B cell (primary cell): ENCODE measurements at regions of chr6 and their contacts with region 1.

Region 1: DNA sequence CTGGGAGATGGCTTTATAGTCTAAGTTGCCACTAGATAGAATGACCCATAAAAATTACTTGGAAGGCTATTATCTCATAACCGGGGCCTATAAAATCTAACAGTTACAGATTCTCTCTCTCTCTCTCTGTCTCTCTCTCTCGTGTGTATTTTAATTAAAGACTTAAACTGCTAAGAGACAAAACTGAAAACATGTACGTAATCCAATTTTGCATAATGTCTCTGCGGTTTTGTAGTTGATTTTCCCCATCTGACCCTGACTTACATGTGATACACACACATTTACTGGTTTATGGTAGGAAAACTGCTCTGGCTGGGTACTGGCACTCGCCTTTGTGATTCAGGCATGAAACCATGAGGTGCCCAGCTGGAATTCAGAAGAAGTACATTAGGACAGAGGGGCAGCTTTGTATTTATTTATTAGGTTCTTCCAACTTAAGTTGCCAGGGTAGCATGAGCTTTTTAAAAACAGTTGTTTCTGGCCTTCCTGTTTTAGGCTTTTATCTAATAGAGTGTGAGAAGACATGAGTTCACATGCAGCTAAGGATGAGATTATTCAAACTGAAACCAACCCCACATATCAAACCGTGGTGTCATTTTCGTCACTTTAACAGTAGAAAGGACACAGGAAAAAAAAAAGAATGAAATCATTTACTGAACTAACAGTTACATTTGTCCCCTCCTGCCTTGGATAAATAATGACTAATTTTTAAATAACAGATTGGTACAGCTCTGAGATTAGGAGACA is 182.5 kb downstream of the GMPR start:
- DNase-seq: peak; percentile 85
- ATAC-seq: peak; percentile 65
- H3K4me3 ChIP-seq: peak overlapping the region in 1 of 5 experiments; percentile 31
- H3K4me3 Mint-ChIP-seq: peak overlapping the region; percentile 79
- H3K27ac ChIP-seq: peak overlapping the region; percentile 87 to 93
- H3K27ac Mint-ChIP-seq: peak overlapping the region; percentile 100
- H3K4me1 ChIP-seq: peaks cover 20 to 37% of the 10 kb centered on the region in 2 donors
- H3K4me1 Mint-ChIP-seq: peaks cover 47% of the 10 kb centered on the region
- H3K27me3 ChIP-seq: no peaks in the 10 kb centered on the region
- H3K27me3 Mint-ChIP-seq: no peaks in the 10 kb centered on the region
- CTCF ChIP-seq: no peak

Region 2: DNA sequence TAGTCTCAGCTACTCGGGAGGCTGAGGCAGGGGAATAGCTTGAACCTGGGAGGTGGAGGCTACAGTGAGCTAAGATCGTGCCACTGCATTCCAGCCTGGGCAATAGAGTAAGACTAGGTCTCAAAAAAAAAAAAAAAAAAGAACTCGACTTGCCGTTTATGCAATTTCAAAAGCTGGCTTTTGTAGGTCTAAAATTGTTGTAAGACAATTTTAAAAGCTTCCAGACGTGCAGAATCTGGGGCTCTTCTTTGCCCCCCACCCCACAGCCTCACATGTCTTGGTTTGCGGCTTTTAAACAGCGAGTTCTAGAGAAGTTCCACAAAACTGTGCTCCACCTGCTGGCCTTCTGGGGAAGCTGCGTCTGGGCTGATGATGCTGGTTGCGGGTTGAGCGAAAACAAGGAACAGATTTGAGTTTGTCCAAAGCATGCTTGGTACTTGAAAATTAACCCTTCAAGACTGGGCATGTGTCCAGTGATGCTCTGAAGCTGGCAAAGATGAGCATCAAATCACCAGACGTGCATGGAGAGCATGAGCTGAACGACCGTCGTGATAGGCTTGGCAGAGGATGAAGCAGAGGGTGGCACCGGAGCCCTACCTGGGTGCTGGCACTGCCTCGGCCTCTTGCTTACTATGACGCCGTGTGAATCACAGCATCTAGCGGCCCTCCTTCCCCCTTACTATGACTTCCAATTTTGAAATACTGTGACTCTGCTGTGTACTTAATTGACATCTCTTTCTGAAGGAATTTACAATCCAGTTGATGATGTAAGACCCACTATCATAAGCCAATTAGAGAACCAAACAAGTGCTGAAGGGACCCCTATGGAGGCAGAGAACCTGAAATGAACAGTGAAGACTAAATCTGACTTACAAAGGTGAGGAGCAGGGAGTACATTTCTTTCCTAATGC is 11.1 kb before region 1 on chr6:
- CTCF ChIA-PET with region 1: interaction called, 36 read pairs
- POLR2A ChIA-PET with region 1: interaction called, 3 read pairs
- intact Hi-C with region 1: loop called (anchors 1 kb)
- DNase-seq: peak; percentile 75
- ATAC-seq: peak; percentile 64
- H3K4me3 ChIP-seq: no peak overlapping the region
- H3K4me3 Mint-ChIP-seq: peak overlapping the region; percentile 53
- H3K27ac ChIP-seq: no peak overlapping the region
- H3K27ac Mint-ChIP-seq: peak overlapping the region; percentile 66
- H3K4me1 ChIP-seq: peaks cover 10 to 50% of the 10 kb centered on the region in 2 donors
- H3K4me1 Mint-ChIP-seq: peaks cover 60% of the 10 kb centered on the region
- H3K27me3 ChIP-seq: no peaks in the 10 kb centered on the region
- H3K27me3 Mint-ChIP-seq: no peaks in the 10 kb centered on the region
- CTCF ChIP-seq: peak; percentile 77

Region 3: DNA sequence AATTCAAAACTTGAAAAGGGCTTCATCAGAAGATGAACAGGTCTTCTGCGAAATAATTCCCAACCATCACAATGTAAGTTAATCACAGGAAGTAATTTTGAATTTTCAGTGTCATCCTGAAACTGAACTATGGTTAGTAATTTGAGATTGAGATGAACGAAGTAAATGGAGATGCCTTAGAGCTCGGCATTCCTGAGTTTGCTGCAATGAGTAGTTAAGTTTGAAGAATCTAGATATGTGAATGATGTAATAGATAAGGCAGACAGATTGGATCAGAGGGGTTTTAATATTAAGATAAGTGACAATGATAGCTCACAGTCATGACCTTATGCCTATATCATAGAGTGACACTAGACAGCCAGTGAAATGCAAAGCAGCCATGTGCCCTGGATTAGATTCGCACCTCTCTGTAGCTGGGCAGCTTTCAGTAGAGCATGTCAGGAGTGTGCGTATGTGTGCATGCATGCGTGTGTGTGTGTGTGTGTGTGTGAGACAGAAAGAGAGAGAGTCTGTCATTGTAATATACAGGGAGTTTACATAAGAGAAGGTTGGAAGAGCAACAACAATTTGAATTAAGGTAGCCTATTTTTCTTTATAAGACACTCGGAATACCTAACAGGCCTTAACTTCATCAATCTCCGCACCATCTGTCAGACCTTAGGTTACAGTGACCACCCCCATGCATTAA is 50.5 kb after region 1 on chr6:
- CTCF ChIA-PET with region 1: interaction called, 4 read pairs
- POLR2A ChIA-PET with region 1: interaction called, 8 read pairs
- intact Hi-C with region 1: loop called (anchors 2 kb)
- DNase-seq: peak; percentile 64
- ATAC-seq: peak; percentile 83
- H3K4me3 ChIP-seq: no peak overlapping the region
- H3K4me3 Mint-ChIP-seq: peak overlapping the region; percentile 58
- H3K27ac ChIP-seq: peak overlapping the region in 1 of 2 donors; percentile 6
- H3K27ac Mint-ChIP-seq: peak overlapping the region; percentile 71
- H3K4me1 ChIP-seq: peaks cover 14 to 39% of the 10 kb centered on the region in 2 donors
- H3K4me1 Mint-ChIP-seq: peaks cover 56% of the 10 kb centered on the region
- H3K27me3 ChIP-seq: no peaks in the 10 kb centered on the region
- H3K27me3 Mint-ChIP-seq: no peaks in the 10 kb centered on the region
- CTCF ChIP-seq: no peak

Region 4: DNA sequence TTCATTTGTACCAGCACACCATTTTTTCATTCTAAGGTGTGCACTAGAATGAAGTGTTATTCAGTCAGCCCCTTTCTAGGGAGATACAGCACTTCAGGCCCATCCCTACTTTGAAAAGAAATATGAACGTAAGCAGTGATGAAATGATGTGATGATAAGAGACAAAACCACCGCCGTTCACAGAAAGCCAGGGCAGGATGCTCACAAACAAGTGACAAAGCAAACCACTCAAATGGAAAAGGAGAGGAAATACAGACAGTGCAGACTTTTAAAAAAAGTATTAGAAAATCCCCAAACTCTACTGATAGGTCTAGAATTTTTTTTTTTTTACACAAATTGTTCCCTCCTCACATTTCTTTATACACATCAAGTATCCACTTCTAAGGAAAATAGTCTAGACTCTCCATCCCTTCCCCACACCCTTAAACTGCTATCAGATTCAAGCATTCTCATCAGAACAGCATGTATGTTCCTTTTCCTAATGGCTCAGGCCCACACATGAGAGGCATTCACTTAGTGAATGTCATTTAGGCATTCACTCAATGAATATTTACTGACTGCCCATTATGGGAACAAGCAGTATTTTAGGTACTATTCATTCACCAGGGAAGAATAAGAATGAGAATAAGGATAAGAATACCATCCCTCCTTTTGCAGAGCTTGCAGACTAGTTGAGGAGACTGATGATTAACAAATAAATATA is 61.0 kb after region 1 on chr6:
- CTCF ChIA-PET with region 1: no interaction called
- POLR2A ChIA-PET with region 1: no interaction called
- intact Hi-C with region 1: loop called (anchors 2 kb)
- DNase-seq: peak; percentile 45
- ATAC-seq: peak; percentile 72
- H3K4me3 ChIP-seq: no peak overlapping the region
- H3K4me3 Mint-ChIP-seq: peak overlapping the region; percentile 47
- H3K27ac ChIP-seq: no peak overlapping the region
- H3K27ac Mint-ChIP-seq: peak overlapping the region; percentile 53
- H3K4me1 ChIP-seq: peaks cover under 1 to 13% of the 10 kb centered on the region in 2 donors
- H3K4me1 Mint-ChIP-seq: peaks cover 41% of the 10 kb centered on the region
- H3K27me3 ChIP-seq: no peaks in the 10 kb centered on the region
- H3K27me3 Mint-ChIP-seq: no peaks in the 10 kb centered on the region
- CTCF ChIP-seq: no peak

Region 5: GRCh38 chr6:16503970-16504415 is 83.1 kb after region 1 on chr6:
- CTCF ChIA-PET with region 1: interaction called, 3 read pairs
- POLR2A ChIA-PET with region 1: no interaction called
- intact Hi-C with region 1: loop called (anchors 2 kb)
- DNase-seq: peak; percentile 57
- ATAC-seq: peak; percentile 66
- H3K4me3 ChIP-seq: no peak overlapping the region
- H3K4me3 Mint-ChIP-seq: peak overlapping the region; percentile 81
- H3K27ac ChIP-seq: no peak overlapping the region
- H3K27ac Mint-ChIP-seq: peak overlapping the region; percentile 90
- H3K4me1 ChIP-seq: peaks cover 12 to 14% of the 10 kb centered on the region in 2 donors
- H3K4me1 Mint-ChIP-seq: peaks cover 36% of the 10 kb centered on the region
- H3K27me3 ChIP-seq: no peaks in the 10 kb centered on the region
- H3K27me3 Mint-ChIP-seq: no peaks in the 10 kb centered on the region
- CTCF ChIP-seq: no peak

Region 6: DNA sequence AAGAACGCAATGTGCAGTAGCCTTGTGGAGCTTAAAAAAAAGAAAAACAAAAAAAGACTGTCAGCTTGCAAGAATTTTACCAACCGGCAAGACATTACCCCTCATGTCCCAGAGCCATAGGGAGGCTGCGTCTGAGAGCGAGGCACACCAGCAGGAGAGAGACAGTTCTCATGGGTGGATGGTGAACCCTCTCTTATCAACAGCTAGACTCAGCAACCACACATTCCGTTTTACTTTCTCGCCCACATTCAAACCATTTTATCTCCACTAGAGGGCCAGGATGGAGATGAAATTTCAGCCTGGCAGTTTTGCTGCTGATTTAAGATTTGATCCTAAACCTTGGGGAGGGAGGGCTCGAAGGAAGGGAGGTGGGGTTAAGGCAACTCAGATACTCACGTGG is 93.4 kb after region 1 on chr6:
- CTCF ChIA-PET with region 1: interaction called, 17 read pairs
- POLR2A ChIA-PET with region 1: no interaction called
- intact Hi-C with region 1: no loop called
- DNase-seq: peak; percentile 42
- ATAC-seq: peak; percentile 47
- H3K4me3 ChIP-seq: no peak overlapping the region
- H3K4me3 Mint-ChIP-seq: no peak overlapping the region
- H3K27ac ChIP-seq: no peak overlapping the region
- H3K27ac Mint-ChIP-seq: peak overlapping the region; percentile 33
- H3K4me1 ChIP-seq: peaks cover 4 to 36% of the 10 kb centered on the region in 2 donors
- H3K4me1 Mint-ChIP-seq: peaks cover 42% of the 10 kb centered on the region
- H3K27me3 ChIP-seq: no peaks in the 10 kb centered on the region
- H3K27me3 Mint-ChIP-seq: no peaks in the 10 kb centered on the region
- CTCF ChIP-seq: peak; percentile 50

Region 7: DNA sequence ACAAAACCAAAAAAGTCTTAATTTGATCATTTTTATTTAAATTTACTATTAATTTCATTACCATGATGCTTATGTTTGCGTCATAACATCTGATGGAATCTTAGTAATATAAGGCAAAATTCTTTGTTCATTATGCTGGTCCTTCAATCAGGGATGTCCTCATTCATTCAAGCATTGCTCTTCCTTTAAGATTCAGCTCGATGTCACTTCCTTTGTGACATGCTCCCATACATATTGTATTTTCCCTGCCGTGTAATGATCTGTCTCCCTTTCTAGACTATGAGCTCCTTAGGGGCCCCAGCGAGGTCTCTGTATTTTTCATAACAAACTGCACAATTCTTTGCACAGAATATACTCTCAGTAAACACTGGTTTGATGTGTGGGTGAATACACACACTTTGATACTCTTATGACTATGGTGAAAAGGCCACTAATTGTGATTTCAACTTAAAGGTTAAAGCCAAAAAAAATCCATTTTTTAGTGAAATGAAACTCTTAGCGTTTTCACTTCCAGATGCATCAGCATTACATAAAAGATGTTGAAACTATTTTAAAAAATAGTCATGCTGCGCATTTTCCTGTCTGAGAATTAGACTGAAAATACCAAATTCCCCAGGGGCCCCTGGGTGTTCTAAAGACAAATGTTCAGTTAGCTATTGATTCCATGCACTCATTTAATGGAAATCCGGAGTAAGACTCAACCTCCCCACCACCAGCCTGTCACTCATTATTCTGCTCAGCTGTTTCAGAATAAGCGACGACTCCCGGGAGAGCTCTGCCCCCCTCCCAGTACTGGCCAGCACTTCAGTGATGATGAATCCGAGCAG is 170.7 kb after region 1 on chr6:
- CTCF ChIA-PET with region 1: no interaction called
- POLR2A ChIA-PET with region 1: no interaction called
- intact Hi-C with region 1: loop called (anchors 2 kb)
- DNase-seq: peak; percentile 53
- ATAC-seq: peak; percentile 72
- H3K4me3 ChIP-seq: no peak overlapping the region
- H3K4me3 Mint-ChIP-seq: peak overlapping the region; percentile 72
- H3K27ac ChIP-seq: peak overlapping the region; percentile 7 to 56
- H3K27ac Mint-ChIP-seq: peak overlapping the region; percentile 60
- H3K4me1 ChIP-seq: peaks cover 19 to 30% of the 10 kb centered on the region in 2 donors
- H3K4me1 Mint-ChIP-seq: peaks cover 55% of the 10 kb centered on the region
- H3K27me3 ChIP-seq: no peaks in the 10 kb centered on the region
- H3K27me3 Mint-ChIP-seq: no peaks in the 10 kb centered on the region
- CTCF ChIP-seq: no peak